ENCODE measurements at regions of chr22 and their contacts with region 1.

Region 1: GRCh38 chr22:20130739-20131596 is 636 bp upstream of the ZDHHC8 start:
- DNase-seq: peak; percentile 91 to 96 (median 93)
- ATAC-seq: peak; percentile 72 to 90 (median 86)
- H3K4me3 ChIP-seq: peak overlapping the region; percentile 88 to 100 (median 99)
- H3K27ac ChIP-seq: peak overlapping the region; percentile 94 to 100 (median 98)
- H3K4me1 ChIP-seq: peaks cover 6 to 51% (median 38%) of the 10 kb centered on the region in 12 donors
- H3K27me3 ChIP-seq: no peaks in the 10 kb centered on the region
- CTCF ChIP-seq: no peak
- POLR2A ChIP-seq: peak in 1 of 2 donors; percentile 27

Region 2: GRCh38 chr22:19962233-19962908 is 168.6 kb before region 1 on chr22:
- intact Hi-C with region 1: loop called in 2 of 10 experiments (anchors 10 kb)
- DNase-seq: peak; percentile 57 to 80 (median 77)
- ATAC-seq: peak; percentile 44 to 63 (median 54)
- H3K4me3 ChIP-seq: no peak overlapping the region
- H3K27ac ChIP-seq: no peak overlapping the region
- H3K4me1 ChIP-seq: peaks cover 0 to 44% (median 25%) of the 10 kb centered on the region in 12 donors
- H3K27me3 ChIP-seq: no peaks in the 10 kb centered on the region
- CTCF ChIP-seq: peak; percentile 36 to 64 (median 54)
- POLR2A ChIP-seq: no peak

Region 3: GRCh38 chr22:19970479-19971275 is 160.3 kb before region 1 on chr22:
- intact Hi-C with region 1: loop called in 4 of 10 experiments (anchors 5 to 10 kb)
- DNase-seq: peak; percentile 56 to 89 (median 64)
- ATAC-seq: peak; percentile 62 to 77 (median 70)
- H3K4me3 ChIP-seq: no peak overlapping the region
- H3K27ac ChIP-seq: peak overlapping the region in 3 of 12 donors; percentile 23 to 55 (median 41)
- H3K4me1 ChIP-seq: peaks cover 0 to 32% (median 5%) of the 10 kb centered on the region in 12 donors
- H3K27me3 ChIP-seq: no peaks in the 10 kb centered on the region
- CTCF ChIP-seq: peak; percentile 90 to 100 (median 95)
- POLR2A ChIP-seq: no peak

Measured in heart left ventricle (tissue), 16 donors.